ENCODE measurements at regions of chr17 and their contacts with region 1.

Region 1: DNA sequence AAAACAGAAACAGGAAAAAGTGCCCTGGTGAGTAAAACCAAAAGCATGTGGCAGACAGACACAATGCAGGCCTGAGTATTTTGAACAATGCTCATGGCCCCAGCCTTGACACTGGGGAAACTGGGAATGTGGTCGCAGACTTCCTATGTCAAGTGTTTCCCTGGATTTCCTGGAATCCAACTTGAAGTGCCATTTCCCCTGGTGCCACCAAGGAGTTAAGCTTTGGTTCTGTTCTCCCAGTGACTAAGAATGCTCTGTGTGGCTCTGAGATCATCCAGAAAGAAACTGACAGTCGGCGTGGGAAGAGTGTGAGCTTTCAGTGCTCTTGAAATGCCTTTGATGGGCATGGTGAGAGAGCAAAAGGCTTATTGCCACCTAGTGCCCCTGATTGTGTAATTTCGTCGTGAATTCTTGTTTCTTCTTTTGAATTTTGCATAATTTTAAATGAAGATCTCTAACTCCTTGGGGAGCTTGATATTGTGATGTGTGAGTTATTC is 96.0 kb downstream of the YPEL2 start:
- DNase-seq: no peak
- ATAC-seq: peak in 1 of 2 donors; percentile 9
- H3K4me3 ChIP-seq: no peak overlapping the region
- H3K27ac ChIP-seq: peak overlapping the region; percentile 91 to 98 (median 95)
- H3K4me1 ChIP-seq: peaks cover 62 to 71% of the 10 kb centered on the region in 2 donors
- H3K27me3 ChIP-seq: no peaks in the 10 kb centered on the region
- CTCF ChIP-seq: no peak
- POLR2A ChIP-seq: no peak

Region 2: GRCh38 chr17:59372138-59372857 is 55.2 kb before region 1 on chr17:
- in situ Hi-C with region 1: loop called in 1 of 4 experiments (anchors 10 kb)
- intact Hi-C with region 1: loop called (anchors 1 kb)
- DNase-seq: peak; percentile 60 to 69
- ATAC-seq: peak; percentile 61 to 64
- H3K4me3 ChIP-seq: peak overlapping the region in 3 of 4 donors; percentile 19 to 45 (median 36)
- H3K27ac ChIP-seq: peak overlapping the region; percentile 96 to 99 (median 98)
- H3K4me1 ChIP-seq: peaks cover 98% of the 10 kb centered on the region in 2 donors
- H3K27me3 ChIP-seq: no peaks in the 10 kb centered on the region
- CTCF ChIP-seq: no peak
- POLR2A ChIP-seq: peak in 1 of 2 donors; percentile 31

Region 3: DNA sequence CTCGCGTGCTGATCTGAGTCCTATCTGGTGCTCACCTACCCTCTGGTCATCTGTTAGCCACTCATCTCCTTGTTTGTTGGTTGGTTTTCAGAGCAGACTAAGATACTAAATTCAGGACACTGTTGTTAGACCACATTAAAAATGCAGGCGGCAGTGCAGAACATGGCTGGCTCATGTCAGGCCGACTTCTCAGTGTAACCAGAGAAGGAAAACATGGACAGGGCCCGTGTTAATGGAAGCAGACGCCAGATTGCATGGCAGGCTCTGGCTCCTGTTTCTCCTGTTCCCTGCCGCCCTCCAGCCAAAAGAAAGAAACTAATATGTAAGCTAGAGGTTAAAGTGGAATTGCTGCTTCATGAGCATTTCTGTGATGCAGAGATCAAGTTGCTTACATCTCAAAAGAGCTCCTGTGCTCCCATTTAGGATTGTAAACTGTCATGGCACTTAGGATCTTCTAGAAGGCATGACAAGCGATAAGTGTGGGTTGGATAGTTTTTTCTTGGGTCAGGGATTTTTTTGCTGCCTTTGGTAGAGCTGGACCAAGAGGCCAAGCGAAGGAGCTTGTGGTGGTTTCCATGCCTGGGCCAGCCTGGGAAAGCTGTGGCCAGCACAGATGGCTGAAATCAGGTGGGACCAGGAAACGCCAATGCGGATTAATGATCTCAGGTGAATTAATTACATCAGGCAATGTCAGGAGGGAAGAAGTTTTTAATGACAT is 40.0 kb before region 1 on chr17:
- in situ Hi-C with region 1: no loop called
- intact Hi-C with region 1: loop called (anchors 1 kb)
- DNase-seq: peak; percentile 80 to 84
- ATAC-seq: peak; percentile 95 to 98
- H3K4me3 ChIP-seq: peak overlapping the region in 2 of 4 donors; percentile 3 to 7
- H3K27ac ChIP-seq: peak overlapping the region; percentile 86 to 98 (median 93)
- H3K4me1 ChIP-seq: peaks cover 45 to 50% of the 10 kb centered on the region in 2 donors
- H3K27me3 ChIP-seq: no peaks in the 10 kb centered on the region
- CTCF ChIP-seq: peak in 2 of 5 experiments; percentile 9 to 13
- POLR2A ChIP-seq: no peak

Region 4: GRCh38 chr17:59534598-59534997 is 107.1 kb after region 1 on chr17:
- in situ Hi-C with region 1: no loop called
- intact Hi-C with region 1: no loop called
- DNase-seq: no peak
- ATAC-seq: no peak
- H3K4me3 ChIP-seq: no peak overlapping the region
- H3K27ac ChIP-seq: no peak overlapping the region
- H3K4me1 ChIP-seq: no peaks in the 10 kb centered on the region
- H3K27me3 ChIP-seq: no peaks in the 10 kb centered on the region
- CTCF ChIP-seq: no peak
- POLR2A ChIP-seq: no peak